CD8-positive, alpha-beta T cell (primary cell): ENCODE measurements at regions of chr9 and their contacts with region 1.

Region 1: GRCh38 chr9:31045789-31046188 is 1338.7 kb upstream of the ACO1 start:
- DNase-seq: no peak
- ATAC-seq: no peak
- H3K4me3 ChIP-seq: no peak overlapping the region
- H3K4me3 Mint-ChIP-seq: no peak overlapping the region
- H3K27ac ChIP-seq: no peak overlapping the region
- H3K27ac Mint-ChIP-seq: no peak overlapping the region
- H3K4me1 ChIP-seq: no peaks in the 10 kb centered on the region
- H3K4me1 Mint-ChIP-seq: no peaks in the 10 kb centered on the region
- H3K27me3 ChIP-seq: no peaks in the 10 kb centered on the region
- H3K27me3 Mint-ChIP-seq: no peaks in the 10 kb centered on the region
- CTCF ChIP-seq: no peak

Region 2: DNA sequence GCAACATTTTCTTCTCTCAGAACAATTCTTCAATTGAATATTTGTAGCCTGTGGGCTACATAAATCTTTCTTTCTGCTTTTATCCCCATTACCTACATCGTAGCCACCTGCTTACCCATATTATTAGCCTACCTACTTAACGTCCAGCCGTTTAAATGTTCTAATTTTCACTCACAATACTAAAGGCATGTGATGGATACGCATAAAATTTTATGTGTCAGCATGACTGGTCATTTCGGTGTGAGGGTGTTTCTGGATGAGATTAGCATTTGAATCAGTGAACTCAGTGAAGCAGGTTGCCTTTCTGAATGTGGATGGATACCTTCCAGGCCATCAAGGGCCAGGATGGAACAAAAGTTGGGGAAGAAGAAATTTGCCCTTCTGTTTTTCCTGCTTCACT is 383.9 kb before region 1 on chr9:
- CTCF ChIA-PET with region 1: no interaction called
- POLR2A ChIA-PET with region 1: no interaction called
- intact Hi-C with region 1: loop called in 1 of 2 experiments (anchors 10 kb)
- DNase-seq: no peak
- ATAC-seq: no peak
- H3K4me3 ChIP-seq: no peak overlapping the region
- H3K4me3 Mint-ChIP-seq: no peak overlapping the region
- H3K27ac ChIP-seq: no peak overlapping the region
- H3K27ac Mint-ChIP-seq: no peak overlapping the region
- H3K4me1 ChIP-seq: no peaks in the 10 kb centered on the region
- H3K4me1 Mint-ChIP-seq: no peaks in the 10 kb centered on the region
- H3K27me3 ChIP-seq: no peaks in the 10 kb centered on the region
- H3K27me3 Mint-ChIP-seq: no peaks in the 10 kb centered on the region
- CTCF ChIP-seq: no peak